AG04450 (cell line): ENCODE measurements at regions of chr2 and their contacts with region 1.

Region 1: DNA sequence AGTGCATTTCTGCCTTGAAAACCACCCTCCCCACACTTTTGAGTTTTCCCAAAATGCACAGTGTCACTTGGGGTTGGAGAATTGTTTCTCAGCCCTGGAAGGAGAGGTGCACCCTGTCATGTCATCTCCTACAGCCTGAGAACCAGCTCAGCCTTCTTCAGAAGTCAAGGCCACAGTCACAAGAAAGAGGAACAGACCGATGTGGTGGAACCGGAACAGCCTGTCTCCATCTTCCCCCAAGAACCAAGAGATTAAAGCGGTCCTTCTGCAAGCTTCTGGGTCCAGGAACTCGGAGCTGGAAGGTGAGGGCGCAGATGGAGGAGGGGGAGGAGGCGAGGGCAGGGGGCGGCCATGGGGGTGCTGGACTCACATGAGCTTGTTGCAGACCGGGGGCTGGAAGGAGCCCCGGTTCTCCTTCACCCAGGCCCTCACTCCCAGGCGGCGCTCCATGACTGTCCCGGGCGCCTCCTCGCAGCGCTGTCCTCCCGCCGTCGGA is 248 bp downstream of the HAAO start:
- DNase-seq: no peak
- H3K4me3 ChIP-seq: peak overlapping the region; percentile 40
- H3K27ac ChIP-seq: no peak overlapping the region
- H3K27me3 ChIP-seq: peaks cover 14% of the 10 kb centered on the region
- CTCF ChIP-seq: no peak

Region 2: DNA sequence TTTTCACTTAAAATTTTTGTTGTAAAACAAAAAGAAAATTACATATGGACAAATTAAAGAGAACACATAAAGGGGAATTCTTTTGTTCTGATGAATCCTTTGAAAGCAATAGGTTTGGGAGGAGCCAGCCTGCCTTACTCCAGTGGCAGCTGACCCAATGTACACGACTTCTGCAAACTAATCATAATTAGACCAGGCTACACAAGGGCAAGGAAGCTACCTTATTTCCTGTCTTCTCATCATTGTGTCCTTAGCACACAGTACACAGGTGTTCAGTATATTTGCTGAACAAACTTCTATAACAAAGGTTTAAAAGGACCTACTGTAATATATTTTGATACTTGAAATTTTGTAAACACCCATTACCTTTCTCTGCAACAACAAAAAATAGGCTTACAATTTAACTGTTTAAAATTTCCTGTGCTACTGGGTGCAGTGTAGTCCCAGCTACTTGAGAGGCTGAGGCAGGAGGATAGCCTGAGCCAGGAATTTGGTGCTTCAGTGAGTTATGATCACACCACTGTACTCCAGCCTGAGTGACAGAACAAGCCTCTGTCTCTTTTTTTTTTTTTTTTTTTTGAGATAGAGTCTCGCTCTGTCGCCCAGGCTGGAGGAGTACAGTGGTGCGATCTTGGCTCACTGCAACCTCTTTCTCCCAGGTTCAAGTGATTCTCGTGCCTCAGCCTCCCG is 317.2 kb before region 1 on chr2:
- CTCF ChIA-PET with region 1: no interaction called
- POLR2A ChIA-PET with region 1: no interaction called
- DNase-seq: no peak
- H3K4me3 ChIP-seq: no peak overlapping the region
- H3K27ac ChIP-seq: no peak overlapping the region
- H3K27me3 ChIP-seq: peaks cover 2% of the 10 kb centered on the region
- CTCF ChIP-seq: no peak

Region 3: GRCh38 chr2:42777883-42778805 is 14.0 kb before region 1 on chr2:
- CTCF ChIA-PET with region 1: interaction called, 13 read pairs
- POLR2A ChIA-PET with region 1: no interaction called
- DNase-seq: no peak
- H3K4me3 ChIP-seq: no peak overlapping the region
- H3K27ac ChIP-seq: no peak overlapping the region
- H3K27me3 ChIP-seq: peaks cover 3% of the 10 kb centered on the region
- CTCF ChIP-seq: no peak

Region 4: GRCh38 chr2:43075054-43075593 is 283.0 kb after region 1 on chr2:
- CTCF ChIA-PET with region 1: no interaction called
- POLR2A ChIA-PET with region 1: no interaction called
- DNase-seq: peak; percentile 92
- H3K4me3 ChIP-seq: no peak overlapping the region
- H3K27ac ChIP-seq: peak overlapping the region; percentile 97
- H3K27me3 ChIP-seq: no peaks in the 10 kb centered on the region
- CTCF ChIP-seq: peak; percentile 18; the same call in 1 of the 2 replicates